Posterior cingulate gyrus (tissue), 11 donors: ENCODE measurements at regions of chr19 and their contacts with region 1.

Region 1: GRCh38 chr19:45717166-45717982 is 13.3 kb downstream of the FBXO46 start:
- DNase-seq: peak; percentile 98 to 100 (median 99)

Region 2: DNA sequence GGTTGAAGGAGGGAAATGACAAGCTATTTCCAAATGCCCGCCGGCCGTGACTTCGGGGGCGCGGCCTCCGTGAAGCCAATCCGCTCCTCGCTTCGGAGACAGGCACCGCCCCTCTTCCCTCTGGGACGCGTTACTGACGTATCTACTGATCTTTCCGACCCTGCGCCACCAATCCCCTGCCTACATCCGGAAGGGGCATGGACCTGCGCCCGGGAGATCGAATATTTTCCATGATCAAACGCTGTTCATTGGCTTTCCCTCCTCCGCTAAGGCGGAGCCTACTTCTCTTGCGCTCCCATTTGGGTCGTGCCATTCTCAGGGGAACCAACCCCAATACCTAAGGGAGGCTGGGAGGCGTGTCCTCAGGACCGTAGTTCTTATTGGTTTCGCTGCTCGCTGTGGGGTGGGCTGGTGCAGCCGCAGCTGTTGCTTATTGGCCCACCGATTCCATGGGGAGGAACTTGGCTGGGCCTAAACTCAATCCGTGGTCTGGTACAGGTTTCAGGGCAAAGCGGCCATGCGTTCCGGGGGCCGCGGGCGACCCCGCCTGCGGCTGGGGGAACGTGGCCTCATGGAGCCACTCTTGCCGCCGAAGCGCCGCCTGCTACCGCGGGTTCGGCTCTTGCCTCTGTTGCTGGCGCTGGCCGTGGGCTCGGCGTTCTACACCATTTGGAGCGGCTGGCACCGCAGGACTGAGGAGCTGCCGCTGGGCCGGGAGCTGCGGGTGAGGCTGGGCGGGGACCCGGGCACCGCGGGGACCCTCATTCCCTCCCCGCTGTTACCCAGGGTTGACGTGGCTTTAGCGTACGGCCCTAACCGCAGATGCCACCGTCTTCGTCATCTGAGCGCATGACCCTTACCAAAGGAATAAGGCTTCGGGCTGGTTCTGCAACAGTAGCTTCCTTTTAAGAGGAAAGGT is 24.9 kb before region 1 on chr19 and contains the start of gene QPCTL:
- intact Hi-C with region 1: loop called (anchors 1 kb)
- DNase-seq: peak; percentile 91 to 100 (median 98)